ENCODE measurements at regions of chr1 and their contacts with region 1.

Region 1: GRCh38 chr1:116817582-116818064 is 63.4 kb downstream of the CD2 start:
- DNase-seq: peak; percentile 76
- ATAC-seq: peak; percentile 74
- H3K4me3 Mint-ChIP-seq: peak overlapping the region; percentile 39
- H3K27ac Mint-ChIP-seq: peak overlapping the region; percentile 40
- H3K4me1 Mint-ChIP-seq: peaks cover 51% of the 10 kb centered on the region
- H3K27me3 Mint-ChIP-seq: no peaks in the 10 kb centered on the region

Region 2: GRCh38 chr1:116737020-116737854 is 80.4 kb before region 1 on chr1:
- POLR2A ChIA-PET with region 1: interaction called, 38 read pairs
- DNase-seq: peak; percentile 81
- ATAC-seq: peak; percentile 57
- H3K4me3 Mint-ChIP-seq: peak overlapping the region; percentile 76
- H3K27ac Mint-ChIP-seq: peak overlapping the region; percentile 97
- H3K4me1 Mint-ChIP-seq: peaks cover 52% of the 10 kb centered on the region
- H3K27me3 Mint-ChIP-seq: no peaks in the 10 kb centered on the region

Region 3: GRCh38 chr1:116754198-116754977 is 63.2 kb before region 1 on chr1 and contains the start of gene CD2:
- POLR2A ChIA-PET with region 1: interaction called, 21 read pairs
- DNase-seq: peak; percentile 50
- ATAC-seq: peak; percentile 80
- H3K4me3 Mint-ChIP-seq: peak within 1 kb of the TSS; percentile 98
- H3K27ac Mint-ChIP-seq: peak within 1 kb of the TSS; percentile 97
- H3K4me1 Mint-ChIP-seq: peaks cover 28% of the 10 kb centered on the region
- H3K27me3 Mint-ChIP-seq: no peaks in the 10 kb centered on the region
- total RNA-seq, gene CD2: 227 to 229 TPM

Region 4: DNA sequence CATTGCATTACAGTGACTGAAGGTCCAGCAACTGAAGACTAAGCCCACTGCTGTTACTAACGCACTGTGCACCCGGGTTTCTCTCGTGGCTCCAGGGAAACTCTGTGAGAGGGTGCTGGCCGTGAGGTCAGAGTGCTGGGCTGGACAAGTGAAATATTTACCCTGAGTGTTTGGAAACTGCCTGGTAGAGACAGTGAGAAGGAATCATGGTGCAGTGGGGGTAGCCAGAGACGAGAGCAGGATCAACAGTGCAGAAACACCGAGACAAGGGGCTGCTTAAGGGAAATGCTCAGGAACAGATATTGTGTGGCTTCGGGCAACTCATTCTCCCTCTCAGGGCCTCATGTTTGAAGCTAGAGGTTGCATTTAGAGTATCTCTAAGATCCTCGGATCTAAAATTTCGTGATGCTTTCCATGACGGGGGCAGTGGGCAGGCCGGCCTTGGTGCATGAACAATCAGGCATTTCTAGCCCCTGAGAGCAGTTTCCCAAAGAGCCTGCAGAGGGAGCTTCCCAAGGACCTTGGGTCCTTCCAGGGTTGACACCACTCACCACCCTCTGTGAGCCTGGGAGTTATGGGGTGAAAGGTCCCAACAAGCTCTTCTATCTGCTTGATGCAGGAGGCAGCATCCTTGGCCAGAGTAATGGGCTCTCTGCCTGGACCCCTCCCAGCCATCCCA is 53.7 kb before region 1 on chr1:
- POLR2A ChIA-PET with region 1: interaction called, 50 read pairs
- DNase-seq: peak; percentile 58
- ATAC-seq: peak; percentile 20
- H3K4me3 Mint-ChIP-seq: peak overlapping the region; percentile 83
- H3K27ac Mint-ChIP-seq: peak overlapping the region; percentile 96
- H3K4me1 Mint-ChIP-seq: peaks cover 90% of the 10 kb centered on the region
- H3K27me3 Mint-ChIP-seq: no peaks in the 10 kb centered on the region

Region 5: GRCh38 chr1:116769561-116769977 is 48.1 kb before region 1 on chr1:
- POLR2A ChIA-PET with region 1: interaction called, 50 read pairs
- DNase-seq: no peak
- ATAC-seq: peak; percentile 68
- H3K4me3 Mint-ChIP-seq: peak overlapping the region; percentile 73
- H3K27ac Mint-ChIP-seq: peak overlapping the region; percentile 96
- H3K4me1 Mint-ChIP-seq: peaks cover 76% of the 10 kb centered on the region
- H3K27me3 Mint-ChIP-seq: no peaks in the 10 kb centered on the region

Measured in activated naive CD8-positive, alpha-beta T cell treated with anti-CD3 and anti-CD28 coated beads, Interleukin-2, amount 10 ng/mL, durations not matched to agents 7 days and 5 days (primary cell).